PC-3 (cell line): ENCODE measurements at regions of chr5 and their contacts with region 1.

Region 1: GRCh38 chr5:40046792-40047191 is 622.0 kb upstream of the DAB2 start:
- DNase-seq: peak; percentile 93
- ATAC-seq: peak; percentile 92
- H3K4me3 ChIP-seq: 0 out of 2 replicates have a peak overlapping the region, but pooled peaks have one; percentile 2
- H3K27ac ChIP-seq: peak overlapping the region; percentile 93
- H3K4me1 ChIP-seq: peaks cover 30% of the 10 kb centered on the region
- H3K27me3 ChIP-seq: no peaks in the 10 kb centered on the region
- CTCF ChIP-seq: no peak

Region 2: GRCh38 chr5:39671561-39671961 is 375.2 kb before region 1 on chr5:
- CTCF ChIA-PET with region 1: no interaction called
- POLR2A ChIA-PET with region 1: no interaction called
- intact Hi-C with region 1: no loop called
- DNase-seq: peak; percentile 55
- ATAC-seq: peak; percentile 49
- H3K4me3 ChIP-seq: no peak overlapping the region
- H3K27ac ChIP-seq: 0 out of 2 replicates have a peak overlapping the region, but pooled peaks have one; percentile 6
- H3K4me1 ChIP-seq: peaks cover 21% of the 10 kb centered on the region
- H3K27me3 ChIP-seq: no peaks in the 10 kb centered on the region
- CTCF ChIP-seq: no peak

Region 3: DNA sequence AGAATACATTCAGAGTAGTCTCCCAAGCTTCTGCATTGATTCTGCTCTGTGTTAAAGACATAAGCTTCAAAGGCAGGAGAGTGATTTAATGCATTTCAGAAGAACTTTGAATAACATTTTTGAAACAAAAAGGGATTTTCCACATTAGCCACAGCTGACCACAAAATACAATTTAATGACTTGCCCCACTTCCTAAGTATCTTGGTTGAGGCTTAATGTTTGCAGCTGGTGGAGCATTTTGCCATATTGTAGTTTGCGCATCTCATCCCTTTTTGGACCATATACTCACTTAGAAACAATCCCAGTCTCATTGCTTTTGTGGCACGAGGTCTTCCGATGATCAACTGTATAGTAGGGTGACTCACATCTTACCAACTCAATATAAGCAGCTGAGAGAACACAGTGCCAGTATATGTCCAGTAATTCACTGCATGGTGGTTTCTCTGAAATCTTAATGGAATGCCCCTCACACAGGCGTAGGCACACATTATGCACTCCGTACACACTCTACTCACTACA is 177.2 kb after region 1 on chr5:
- CTCF ChIA-PET with region 1: no interaction called
- POLR2A ChIA-PET with region 1: no interaction called
- intact Hi-C with region 1: loop called (anchors 10 kb)
- DNase-seq: peak; percentile 90
- ATAC-seq: peak; percentile 95
- H3K4me3 ChIP-seq: peak overlapping the region; percentile 38; the same call in 1 of the 2 replicates
- H3K27ac ChIP-seq: peak overlapping the region; percentile 92
- H3K4me1 ChIP-seq: peaks cover 32% of the 10 kb centered on the region
- H3K27me3 ChIP-seq: no peaks in the 10 kb centered on the region
- CTCF ChIP-seq: no peak